ENCODE measurements at regions of chr7 and their contacts with region 1.

Region 1: DNA sequence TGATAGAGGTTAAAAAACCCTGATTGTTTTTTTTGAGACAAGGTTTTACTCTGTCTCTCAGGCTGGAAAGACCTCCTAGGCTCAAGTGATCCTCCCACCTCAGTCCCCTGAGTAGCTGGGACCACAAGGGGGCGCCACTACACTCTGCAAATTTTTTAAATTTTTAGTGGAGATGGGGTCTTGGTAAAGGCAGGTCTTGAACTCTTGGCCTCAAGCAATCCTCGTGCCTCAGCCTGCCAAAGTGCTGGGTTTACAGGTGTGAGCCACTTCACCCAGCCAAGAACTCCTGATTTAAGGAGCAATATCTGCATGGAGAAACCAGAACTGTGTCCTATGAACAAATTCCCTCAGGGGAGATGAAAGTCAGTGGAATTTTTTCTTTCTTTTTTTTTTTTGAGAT is 7.3 kb upstream of the KLHDC10 start:
- DNase-seq: peak; percentile 66
- H3K4me3 ChIP-seq: no peak overlapping the region
- H3K4me3 Mint-ChIP-seq: no peak overlapping the region
- H3K27ac Mint-ChIP-seq: no peak overlapping the region
- H3K4me1 ChIP-seq: no peaks in the 10 kb centered on the region
- H3K4me1 Mint-ChIP-seq: peaks cover 7% of the 10 kb centered on the region
- H3K27me3 ChIP-seq: no peaks in the 10 kb centered on the region
- H3K27me3 Mint-ChIP-seq: no peaks in the 10 kb centered on the region
- CTCF ChIP-seq: peak; percentile 54 to 57

Region 2: GRCh38 chr7:130721486-130722280 is 658.6 kb after region 1 on chr7:
- CTCF ChIA-PET with region 1: no interaction called
- POLR2A ChIA-PET with region 1: no interaction called
- intact Hi-C with region 1: loop called (anchors 2 kb)
- DNase-seq: peak; percentile 77 to 79
- H3K4me3 ChIP-seq: no peak overlapping the region
- H3K4me3 Mint-ChIP-seq: no peak overlapping the region
- H3K27ac Mint-ChIP-seq: no peak overlapping the region
- H3K4me1 ChIP-seq: no peaks in the 10 kb centered on the region
- H3K4me1 Mint-ChIP-seq: no peaks in the 10 kb centered on the region
- H3K27me3 ChIP-seq: no peaks in the 10 kb centered on the region; the same call in 1 of the 2 replicates
- H3K27me3 Mint-ChIP-seq: no peaks in the 10 kb centered on the region
- CTCF ChIP-seq: peak; percentile 67 to 81